ENCODE measurements at regions of chr18 and their contacts with region 1.

Region 1: GRCh38 chr18:11980555-11981382 is 538 bp upstream of the IMPA2 start:
- DNase-seq: peak; percentile 98 to 99
- H3K4me3 ChIP-seq: peak overlapping the region; percentile 40 to 83 (median 63)
- H3K27ac ChIP-seq: peak overlapping the region; percentile 94
- H3K4me1 ChIP-seq: peaks cover 7 to 15% (median 9%) of the 10 kb centered on the region in 4 experiments
- H3K27me3 ChIP-seq: no peaks in the 10 kb centered on the region
- CTCF ChIP-seq: peak in 1 of 3 experiments; percentile 13; a peak in 1 of 4 replicates
- EP300 ChIP-seq: no peak
- POLR2A ChIP-seq: peak; percentile 79 to 86
- RAD21 ChIP-seq: peak; percentile 12; a peak in 2 of 4 replicates

Region 2: GRCh38 chr18:11947214-11948191 is 33.3 kb before region 1 on chr18:
- CTCF ChIA-PET with region 1: interaction called, 8 read pairs
- POLR2A ChIA-PET with region 1: interaction called, 29 read pairs
- DNase-seq: peak; percentile 73 to 83
- H3K4me3 ChIP-seq: peak overlapping the region; percentile 39 to 69 (median 52)
- H3K27ac ChIP-seq: peak overlapping the region; percentile 62; the same call in 1 of the 2 replicates
- H3K4me1 ChIP-seq: peaks cover 3 to 11% (median 7%) of the 10 kb centered on the region in 4 experiments
- H3K27me3 ChIP-seq: no peaks in the 10 kb centered on the region
- CTCF ChIP-seq: no peak
- EP300 ChIP-seq: no peak
- POLR2A ChIP-seq: peak in 1 of 2 experiments; percentile 61; a peak in 2 of 3 replicates
- RAD21 ChIP-seq: no peak; a peak in 1 of 4 replicates

Region 3: DNA sequence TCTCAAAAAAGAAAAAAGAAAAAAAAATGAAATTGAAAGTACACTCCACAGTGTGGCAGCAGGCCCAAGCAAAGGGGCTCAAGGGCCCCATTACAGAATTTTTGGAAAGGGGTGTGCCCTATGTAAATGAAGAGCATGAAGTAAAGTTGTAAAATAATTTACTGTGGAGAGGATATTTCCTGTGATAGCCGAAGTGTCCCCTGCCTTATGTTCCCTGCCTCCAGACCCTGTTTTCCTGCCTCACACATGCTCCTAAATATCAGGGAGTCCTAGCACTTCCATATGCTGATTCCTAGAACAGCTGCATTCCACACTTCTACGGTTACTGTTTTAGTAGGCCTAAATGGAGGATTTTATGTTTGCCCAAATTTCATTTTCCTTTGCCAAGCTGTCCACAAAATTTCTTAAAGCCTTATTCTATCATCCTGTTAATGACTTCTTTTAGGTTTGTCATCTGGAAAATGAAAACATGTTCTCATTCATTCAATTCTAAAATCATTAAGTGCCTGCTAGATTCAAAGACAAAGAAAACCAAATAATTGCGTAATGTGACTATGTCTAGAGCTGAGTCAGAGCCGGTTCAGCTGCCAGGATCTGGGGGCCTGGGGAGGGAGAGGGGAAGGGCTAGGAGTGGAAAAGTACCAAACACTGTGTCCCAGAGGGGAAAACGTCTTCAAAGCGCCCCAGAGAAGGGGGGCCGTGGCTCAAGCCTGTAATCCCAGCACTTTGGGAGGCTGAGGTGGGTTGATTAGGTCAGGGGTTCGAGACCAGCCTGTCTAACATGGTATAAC is 25.3 kb before region 1 on chr18:
- CTCF ChIA-PET with region 1: interaction called, 5 read pairs
- POLR2A ChIA-PET with region 1: interaction called, 29 read pairs
- DNase-seq: no peak
- H3K4me3 ChIP-seq: no peak overlapping the region
- H3K27ac ChIP-seq: 0 out of 2 replicates have a peak overlapping the region, but pooled peaks have one; percentile 32
- H3K4me1 ChIP-seq: peaks cover 0 to 9% (median 5%) of the 10 kb centered on the region in 4 experiments; a peak in 5 of 7 replicates
- H3K27me3 ChIP-seq: no peaks in the 10 kb centered on the region
- CTCF ChIP-seq: no peak
- EP300 ChIP-seq: no peak
- POLR2A ChIP-seq: no peak
- RAD21 ChIP-seq: no peak; a peak in 1 of 4 replicates

Region 4: GRCh38 chr18:12049978-12050811 is 69.4 kb after region 1 on chr18:
- CTCF ChIA-PET with region 1: no interaction called
- POLR2A ChIA-PET with region 1: no interaction called
- DNase-seq: no peak
- H3K4me3 ChIP-seq: no peak overlapping the region
- H3K27ac ChIP-seq: no peak overlapping the region
- H3K4me1 ChIP-seq: peaks cover 0 to 4% (median 0%) of the 10 kb centered on the region in 4 experiments; a peak in 1 of 7 replicates
- H3K27me3 ChIP-seq: no peaks in the 10 kb centered on the region; a peak in 1 of 7 replicates
- CTCF ChIP-seq: no peak
- EP300 ChIP-seq: no peak
- POLR2A ChIP-seq: no peak
- RAD21 ChIP-seq: no peak

Measured in H1 (cell line).